A673 (cell line): ENCODE measurements at regions of chr2 and their contacts with region 1.

Region 1: DNA sequence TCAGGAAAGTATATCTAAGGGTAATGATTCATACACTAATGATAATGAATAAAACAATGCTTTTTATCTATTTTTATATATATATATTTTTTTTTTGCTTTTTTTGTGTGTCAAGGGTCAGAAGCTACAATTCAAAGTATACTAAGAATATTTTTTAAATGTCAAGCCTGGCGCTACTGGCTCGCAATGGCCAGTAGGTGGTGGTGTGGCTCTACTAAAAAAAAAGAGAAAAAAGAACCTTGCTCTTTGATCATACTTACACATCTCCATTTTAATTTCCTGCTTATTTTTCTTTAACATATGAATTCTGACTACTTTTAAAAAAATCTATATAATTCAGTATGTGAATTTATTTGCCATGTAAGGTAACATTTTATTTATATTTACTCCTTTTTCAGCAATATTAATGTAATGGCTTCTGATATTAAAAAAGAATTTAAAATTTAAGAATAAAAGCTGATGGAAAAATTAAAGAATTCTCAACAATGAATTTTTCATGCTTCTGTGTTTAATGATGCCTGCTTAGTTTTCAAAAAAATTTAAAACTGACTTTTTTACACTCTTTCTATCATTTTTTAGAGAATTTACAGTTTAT is 232.9 kb downstream of the GULP1 start:
- DNase-seq: peak; percentile 81
- H3K4me3 ChIP-seq: no peak overlapping the region
- H3K27ac ChIP-seq: no peak overlapping the region
- H3K4me1 ChIP-seq: peaks cover 17% of the 10 kb centered on the region
- H3K27me3 ChIP-seq: no peaks in the 10 kb centered on the region
- CTCF ChIP-seq: peak; percentile 85

Region 2: GRCh38 chr2:188978291-188979081 is 453.9 kb after region 1 on chr2:
- CTCF ChIA-PET with region 1: interaction called, 16 read pairs
- POLR2A ChIA-PET with region 1: no interaction called
- intact Hi-C with region 1: loop called (anchors 2 kb)
- DNase-seq: peak; percentile 82
- H3K4me3 ChIP-seq: peak overlapping the region; percentile 5
- H3K27ac ChIP-seq: no peak overlapping the region
- H3K4me1 ChIP-seq: peaks cover 36% of the 10 kb centered on the region
- H3K27me3 ChIP-seq: no peaks in the 10 kb centered on the region
- CTCF ChIP-seq: peak; percentile 72

Region 3: DNA sequence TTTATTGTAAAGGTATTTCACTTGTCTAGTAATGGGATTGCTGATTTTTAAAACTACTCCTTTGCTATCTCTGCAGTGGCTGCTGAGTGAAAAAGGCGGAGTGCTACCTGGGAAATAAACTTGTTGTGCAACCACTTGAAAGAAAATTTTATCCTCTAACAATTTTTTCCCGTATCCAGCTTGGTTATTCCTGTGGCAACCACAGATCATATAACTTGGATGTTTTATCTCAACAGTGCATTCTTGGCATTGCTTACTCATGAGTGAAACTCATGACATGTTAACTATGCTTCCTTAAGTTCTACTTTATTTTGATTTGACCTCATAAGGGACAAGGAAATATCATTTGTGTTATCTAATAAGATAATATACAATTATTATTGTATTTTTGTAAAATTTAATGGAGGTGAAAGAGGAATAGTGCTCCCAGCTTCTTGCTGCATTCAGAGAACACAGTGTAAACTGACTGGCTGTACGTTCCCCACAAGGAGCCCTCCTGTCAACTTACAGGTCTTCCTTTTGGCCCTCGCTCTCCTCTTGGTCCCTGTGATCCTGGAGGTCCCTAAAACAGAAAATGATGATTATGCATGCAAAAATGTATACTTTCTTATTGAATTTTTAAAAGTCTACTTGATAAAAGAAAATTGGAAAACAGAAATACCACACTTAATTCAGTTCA is 572.3 kb after region 1 on chr2:
- CTCF ChIA-PET with region 1: no interaction called
- POLR2A ChIA-PET with region 1: no interaction called
- intact Hi-C with region 1: loop called (anchors 5 kb)
- DNase-seq: no peak
- H3K4me3 ChIP-seq: no peak overlapping the region
- H3K27ac ChIP-seq: no peak overlapping the region
- H3K4me1 ChIP-seq: peaks cover 7% of the 10 kb centered on the region
- H3K27me3 ChIP-seq: no peaks in the 10 kb centered on the region
- CTCF ChIP-seq: no peak

Region 4: DNA sequence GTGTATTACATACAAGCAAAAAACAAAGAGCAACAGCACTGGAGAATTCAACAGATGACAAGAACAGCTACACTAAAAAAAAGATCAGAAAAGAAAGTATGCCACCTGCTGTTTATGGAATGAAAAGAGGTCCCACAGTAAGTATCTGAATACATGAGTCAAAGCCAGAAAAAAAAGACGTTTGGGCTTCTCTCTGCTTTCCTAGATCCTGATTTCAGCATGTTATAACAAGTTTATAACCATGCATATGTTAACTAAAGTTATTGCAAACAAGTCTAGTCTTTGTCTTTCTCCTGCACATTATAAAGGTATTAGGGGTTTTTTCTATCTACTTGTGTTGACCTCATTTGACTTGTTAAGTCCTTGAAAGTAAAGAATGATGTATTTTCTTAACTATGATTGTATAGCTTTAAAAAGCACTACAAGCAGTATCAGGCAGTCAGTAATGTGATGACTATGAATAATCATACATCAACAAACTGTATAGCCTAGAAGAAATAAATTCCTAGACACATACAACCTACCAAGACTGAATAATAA is 763.4 kb after region 1 on chr2:
- CTCF ChIA-PET with region 1: no interaction called
- POLR2A ChIA-PET with region 1: no interaction called
- intact Hi-C with region 1: loop called (anchors 5 kb)
- DNase-seq: peak; percentile 91
- H3K4me3 ChIP-seq: no peak overlapping the region
- H3K27ac ChIP-seq: no peak overlapping the region
- H3K4me1 ChIP-seq: peaks cover 17% of the 10 kb centered on the region
- H3K27me3 ChIP-seq: no peaks in the 10 kb centered on the region
- CTCF ChIP-seq: peak; percentile 73

Region 5: GRCh38 chr2:189394525-189394924 is 869.9 kb after region 1 on chr2:
- CTCF ChIA-PET with region 1: no interaction called
- POLR2A ChIA-PET with region 1: no interaction called
- intact Hi-C with region 1: no loop called
- DNase-seq: no peak
- H3K4me3 ChIP-seq: no peak overlapping the region
- H3K27ac ChIP-seq: no peak overlapping the region
- H3K4me1 ChIP-seq: peaks cover 13% of the 10 kb centered on the region
- H3K27me3 ChIP-seq: no peaks in the 10 kb centered on the region
- CTCF ChIP-seq: no peak